BJ (cell line): ENCODE measurements at regions of chr6 and their contacts with region 1.

Region 1: DNA sequence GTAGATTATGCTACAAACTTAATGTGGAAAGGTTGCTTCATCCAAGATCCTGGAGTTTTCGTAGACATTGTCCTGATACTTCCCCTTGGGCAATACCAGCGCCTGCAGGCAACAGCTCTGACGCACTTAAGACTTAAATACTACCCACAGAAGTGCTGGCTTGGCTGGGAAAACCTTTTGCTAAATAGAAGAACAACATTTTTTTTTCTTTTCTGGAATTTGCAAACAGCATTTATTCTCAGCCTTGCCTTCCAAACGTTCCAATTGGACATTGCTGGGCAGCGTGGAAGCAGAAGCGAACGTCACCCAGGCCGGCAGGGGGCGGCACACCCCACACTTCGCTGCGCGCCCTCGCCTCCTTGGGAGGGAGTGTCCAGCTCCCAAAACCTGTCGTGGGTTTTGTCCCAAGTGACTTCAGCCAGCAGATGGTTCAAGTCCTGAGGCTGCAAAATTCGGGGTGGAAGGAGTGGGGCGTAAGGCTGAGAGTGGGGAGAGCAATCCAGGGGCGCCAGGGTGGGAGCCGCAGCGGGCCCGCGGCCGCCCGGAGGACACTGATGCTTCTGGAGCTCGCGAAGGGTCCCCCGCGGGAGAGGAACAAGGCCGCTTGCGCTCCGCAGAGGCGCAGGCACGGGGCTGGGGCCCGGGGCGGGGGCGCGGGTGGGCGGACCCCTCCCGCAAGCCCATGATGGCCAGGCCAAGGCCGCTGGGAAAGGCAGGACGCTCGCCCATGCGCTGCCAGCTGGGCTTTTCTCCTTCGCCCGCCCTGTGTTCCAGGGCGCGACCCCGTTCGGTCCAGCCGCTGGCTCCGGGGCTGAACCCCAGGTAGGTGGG is 60.8 kb upstream of the MAP3K4 start:
- DNase-seq: peak; percentile 16
- H3K4me3 ChIP-seq: peak overlapping the region; percentile 42
- H3K27me3 ChIP-seq: peaks cover 8% of the 10 kb centered on the region
- CTCF ChIP-seq: peak; percentile 94

Region 2: GRCh38 chr6:160919723-160920440 is 10.9 kb before region 1 on chr6:
- CTCF ChIA-PET with region 1: interaction called, 24 read pairs
- POLR2A ChIA-PET with region 1: no interaction called
- DNase-seq: peak; percentile 31
- H3K4me3 ChIP-seq: no peak overlapping the region
- H3K27me3 ChIP-seq: no peaks in the 10 kb centered on the region
- CTCF ChIP-seq: no peak

Region 3: DNA sequence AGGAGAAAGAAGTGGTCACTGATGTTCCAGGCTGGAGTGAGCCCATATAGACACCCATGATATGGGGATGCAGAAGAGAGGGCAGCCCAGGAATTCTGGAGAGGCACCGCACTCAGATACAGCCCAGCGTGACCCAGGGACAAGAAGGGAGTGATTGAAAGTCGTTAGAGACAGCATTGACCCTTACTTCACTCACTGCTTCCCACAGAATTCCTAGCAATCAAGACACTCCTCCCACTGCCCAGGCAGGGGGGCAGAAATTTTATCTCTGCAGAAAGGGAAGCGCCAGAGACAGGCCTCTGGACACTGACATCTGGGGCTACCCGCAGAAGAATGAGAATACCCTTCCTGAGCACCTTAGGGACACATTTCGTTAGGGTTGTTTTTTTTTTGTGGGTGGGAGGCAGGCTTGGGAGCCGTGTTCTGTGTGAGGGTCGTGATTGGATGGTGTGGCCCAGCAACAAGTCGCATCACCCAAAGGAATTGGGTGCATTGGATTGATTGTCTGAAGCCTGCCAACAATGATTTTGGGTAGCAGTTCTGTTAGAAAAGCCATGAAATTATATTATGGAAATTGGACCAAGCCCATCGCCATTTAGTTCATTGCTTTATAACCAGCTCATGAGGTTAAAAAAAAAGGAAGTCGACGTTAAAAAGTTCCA is 14.9 kb after region 1 on chr6:
- CTCF ChIA-PET with region 1: interaction called, 18 read pairs
- POLR2A ChIA-PET with region 1: no interaction called
- DNase-seq: no peak
- H3K4me3 ChIP-seq: no peak overlapping the region
- H3K27me3 ChIP-seq: no peaks in the 10 kb centered on the region
- CTCF ChIP-seq: no peak

Region 4: GRCh38 chr6:160972111-160972510 is 41.3 kb after region 1 on chr6:
- CTCF ChIA-PET with region 1: interaction called, 22 read pairs
- POLR2A ChIA-PET with region 1: no interaction called
- DNase-seq: peak; percentile 47
- H3K4me3 ChIP-seq: no peak overlapping the region
- H3K27me3 ChIP-seq: peaks cover 3% of the 10 kb centered on the region
- CTCF ChIP-seq: no peak

Region 5: DNA sequence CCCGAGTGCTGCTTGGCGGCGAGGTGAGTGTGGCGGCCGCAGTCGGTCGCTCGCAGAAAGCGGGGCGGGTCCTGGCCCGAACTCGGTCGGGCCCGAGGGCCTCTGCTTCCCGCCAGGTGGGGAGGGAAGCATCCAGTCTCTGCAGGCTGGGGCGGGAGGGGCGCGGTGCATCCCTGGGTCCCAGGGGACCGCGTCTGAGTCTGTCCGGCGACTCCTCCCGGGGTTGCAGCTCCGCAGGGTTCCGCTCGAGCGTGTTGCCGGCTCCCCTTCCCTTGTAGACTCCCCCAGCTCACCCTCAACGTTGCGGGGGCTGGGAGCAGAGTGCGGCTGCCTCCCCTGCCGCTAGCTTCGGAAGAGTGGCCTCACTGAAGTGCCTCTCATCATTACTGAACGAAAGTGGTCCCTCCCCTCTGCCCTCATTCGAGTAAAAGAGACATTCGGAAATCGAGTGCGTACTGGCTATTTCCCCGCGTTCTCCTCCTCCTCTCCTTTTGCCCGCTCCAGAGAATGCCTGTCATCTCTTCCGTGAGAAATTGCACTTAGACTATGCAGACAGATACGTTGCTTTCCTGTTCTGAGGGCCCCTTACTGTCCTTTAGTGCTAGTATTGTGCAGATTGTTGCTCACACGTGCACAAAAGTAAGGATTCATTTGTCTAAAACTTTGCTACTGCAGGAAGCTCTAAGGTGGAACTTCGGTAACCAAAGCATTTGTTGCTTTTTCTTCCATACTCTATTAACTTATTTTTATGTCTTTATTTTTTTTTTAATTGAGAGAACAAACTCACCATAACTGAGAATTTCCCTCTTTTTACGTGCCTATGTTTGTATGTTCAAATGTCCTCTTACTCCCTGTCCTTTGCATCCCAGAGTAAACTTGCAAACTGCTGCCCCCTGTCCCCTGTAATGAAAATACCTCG is 61.6 kb after region 1 on chr6:
- CTCF ChIA-PET with region 1: interaction called, 89 read pairs
- POLR2A ChIA-PET with region 1: no interaction called
- DNase-seq: no peak
- H3K4me3 ChIP-seq: peak overlapping the region; percentile 78
- H3K27me3 ChIP-seq: no peaks in the 10 kb centered on the region
- CTCF ChIP-seq: peak; percentile 76

Region 6: DNA sequence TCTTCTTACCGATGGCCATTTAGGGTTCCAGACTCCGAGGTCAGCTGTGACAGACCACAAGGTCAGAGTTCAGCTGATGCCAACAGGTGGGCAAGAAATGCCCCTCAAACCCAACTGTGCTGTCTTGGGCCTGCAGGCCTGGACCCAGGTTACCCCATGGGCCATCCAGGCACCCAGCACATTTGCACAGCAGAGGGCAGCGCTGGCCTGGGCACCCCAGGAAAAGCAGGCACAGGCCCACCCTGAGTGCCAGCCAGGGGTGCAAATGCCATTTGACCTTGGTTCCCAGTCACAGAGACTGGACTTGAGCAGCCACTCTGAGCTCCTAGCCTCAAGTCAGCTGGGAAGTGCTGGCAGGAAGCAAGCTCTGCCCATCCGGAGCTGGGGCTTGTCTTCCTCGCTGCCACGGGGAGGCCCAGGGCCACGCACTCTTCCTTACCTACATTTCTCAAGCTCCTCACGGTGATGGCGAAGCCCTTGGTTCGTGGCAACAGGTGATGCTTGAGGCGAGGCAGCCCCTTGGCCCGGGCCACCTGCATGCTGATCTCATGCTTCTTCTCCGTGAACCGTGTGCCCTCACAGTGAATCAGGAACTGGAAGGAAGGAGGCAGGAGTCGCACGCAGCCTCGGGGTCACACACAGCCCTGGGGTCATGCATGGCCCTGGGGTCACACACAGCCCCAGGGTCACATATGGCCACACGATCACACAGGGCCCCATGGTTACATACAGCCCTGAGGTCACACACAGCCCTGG is 222.3 kb after region 1 on chr6:
- CTCF ChIA-PET with region 1: interaction called, 10 read pairs
- POLR2A ChIA-PET with region 1: no interaction called
- DNase-seq: no peak
- H3K4me3 ChIP-seq: no peak overlapping the region
- H3K27me3 ChIP-seq: no peaks in the 10 kb centered on the region
- CTCF ChIP-seq: peak; percentile 62